Mucosa of descending colon (tissue), 3 donors: ENCODE measurements at regions of chr4 and their contacts with region 1.

Region 1: GRCh38 chr4:183059797-183060196 is 39.3 kb upstream of the WWC2 start:
- DNase-seq: no peak
- ATAC-seq: no peak
- H3K4me3 ChIP-seq: no peak overlapping the region
- H3K4me1 ChIP-seq: peaks cover 10% of the 10 kb centered on the region
- CTCF ChIP-seq: no peak

Region 2: GRCh38 chr4:182938205-182938645 is 121.6 kb before region 1 on chr4:
- intact Hi-C with region 1: loop called in 1 of 2 experiments (anchors 10 kb)
- DNase-seq: peak; percentile 70 to 83 (median 79)
- ATAC-seq: peak; percentile 98
- H3K4me3 ChIP-seq: no peak overlapping the region
- H3K4me1 ChIP-seq: no peaks in the 10 kb centered on the region
- CTCF ChIP-seq: peak; percentile 76